ENCODE measurements at regions of chr13 and their contacts with region 1.

Region 1: GRCh38 chr13:32164622-32165268 is 133.2 kb downstream of the FRY start:
- DNase-seq: peak; percentile 81
- H3K4me3 Mint-ChIP-seq: no peak overlapping the region
- H3K27ac Mint-ChIP-seq: peak overlapping the region; percentile 61
- H3K4me1 Mint-ChIP-seq: peaks cover 12% of the 10 kb centered on the region
- H3K27me3 Mint-ChIP-seq: no peaks in the 10 kb centered on the region
- CTCF ChIP-seq: peak; percentile 38

Region 2: GRCh38 chr13:32125221-32125631 is 39.5 kb before region 1 on chr13:
- CTCF ChIA-PET with region 1: interaction called, 4 read pairs
- POLR2A ChIA-PET with region 1: interaction called, 19 read pairs
- intact Hi-C with region 1: no loop called
- DNase-seq: peak; percentile 95
- H3K4me3 Mint-ChIP-seq: peak overlapping the region; percentile 16
- H3K27ac Mint-ChIP-seq: peak overlapping the region; percentile 64
- H3K4me1 Mint-ChIP-seq: peaks cover 5% of the 10 kb centered on the region
- H3K27me3 Mint-ChIP-seq: no peaks in the 10 kb centered on the region
- CTCF ChIP-seq: no peak

Region 3: DNA sequence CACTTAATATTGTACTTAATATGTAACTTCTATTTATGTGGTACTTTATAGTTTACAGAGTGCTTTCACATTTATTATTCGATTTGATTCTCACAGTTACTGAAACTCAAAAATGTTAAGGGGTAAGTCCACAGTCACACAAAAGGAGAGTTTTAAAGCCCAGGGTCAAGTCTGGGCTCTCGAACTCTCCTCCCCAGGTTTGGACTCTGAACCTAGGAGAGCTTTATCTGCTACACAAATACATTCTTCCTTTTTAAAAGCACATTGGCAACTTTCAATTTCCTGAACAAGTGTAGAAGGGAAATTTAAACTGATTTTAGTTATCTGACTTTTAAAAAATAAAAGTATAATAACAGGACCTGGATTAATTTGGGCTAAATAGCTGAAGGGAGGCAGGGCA is 11.2 kb after region 1 on chr13:
- CTCF ChIA-PET with region 1: interaction called, 13 read pairs
- POLR2A ChIA-PET with region 1: interaction called, 6 read pairs
- intact Hi-C with region 1: no loop called
- DNase-seq: no peak
- H3K4me3 Mint-ChIP-seq: no peak overlapping the region
- H3K27ac Mint-ChIP-seq: no peak overlapping the region
- H3K4me1 Mint-ChIP-seq: no peaks in the 10 kb centered on the region
- H3K27me3 Mint-ChIP-seq: no peaks in the 10 kb centered on the region
- CTCF ChIP-seq: no peak

Region 4: DNA sequence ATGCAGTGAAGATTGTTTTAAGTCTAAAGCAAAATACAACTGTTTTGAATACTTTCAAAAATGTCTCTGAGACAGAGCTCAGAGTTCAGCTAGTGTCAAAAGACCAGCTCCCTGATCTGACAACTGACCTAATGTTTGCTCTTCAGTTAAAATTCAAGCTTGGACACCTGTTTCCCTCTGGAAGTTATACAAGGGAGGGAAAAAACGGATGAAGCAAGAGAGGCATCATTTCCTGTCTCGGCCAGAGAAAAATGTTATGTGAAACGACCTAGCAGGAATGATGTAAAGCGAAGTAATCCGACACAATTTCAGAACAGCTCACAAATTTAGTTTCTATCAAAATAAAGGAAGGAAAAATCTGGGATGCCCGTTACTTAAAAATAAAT is 91.0 kb after region 1 on chr13:
- CTCF ChIA-PET with region 1: interaction called, 10 read pairs
- POLR2A ChIA-PET with region 1: interaction called, 8 read pairs
- intact Hi-C with region 1: no loop called
- DNase-seq: peak; percentile 76
- H3K4me3 Mint-ChIP-seq: no peak overlapping the region
- H3K27ac Mint-ChIP-seq: no peak overlapping the region
- H3K4me1 Mint-ChIP-seq: peaks cover 19% of the 10 kb centered on the region
- H3K27me3 Mint-ChIP-seq: no peaks in the 10 kb centered on the region
- CTCF ChIP-seq: no peak

Region 5: DNA sequence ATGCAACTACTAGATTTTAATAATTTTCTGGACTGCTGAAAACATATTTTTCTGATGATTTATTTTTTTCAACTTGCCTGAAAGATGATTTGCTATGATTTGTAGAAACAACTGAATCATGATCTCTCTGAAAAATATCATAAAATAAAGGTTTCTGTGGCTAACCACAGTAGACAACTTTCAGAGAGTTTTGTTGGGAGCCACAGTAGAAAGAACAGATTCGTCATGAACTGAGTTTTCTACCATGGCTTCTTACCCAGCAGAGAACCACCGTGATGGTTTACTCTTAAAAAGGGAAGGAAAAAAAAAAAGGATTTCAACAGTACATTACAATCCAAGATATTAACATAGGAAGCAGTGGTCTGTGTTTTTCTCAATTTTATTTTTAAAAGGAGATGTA is 132.5 kb after region 1 on chr13:
- CTCF ChIA-PET with region 1: no interaction called
- POLR2A ChIA-PET with region 1: no interaction called
- intact Hi-C with region 1: no loop called
- DNase-seq: no peak
- H3K4me3 Mint-ChIP-seq: no peak overlapping the region
- H3K27ac Mint-ChIP-seq: no peak overlapping the region
- H3K4me1 Mint-ChIP-seq: no peaks in the 10 kb centered on the region
- H3K27me3 Mint-ChIP-seq: no peaks in the 10 kb centered on the region
- CTCF ChIP-seq: no peak

Region 6: DNA sequence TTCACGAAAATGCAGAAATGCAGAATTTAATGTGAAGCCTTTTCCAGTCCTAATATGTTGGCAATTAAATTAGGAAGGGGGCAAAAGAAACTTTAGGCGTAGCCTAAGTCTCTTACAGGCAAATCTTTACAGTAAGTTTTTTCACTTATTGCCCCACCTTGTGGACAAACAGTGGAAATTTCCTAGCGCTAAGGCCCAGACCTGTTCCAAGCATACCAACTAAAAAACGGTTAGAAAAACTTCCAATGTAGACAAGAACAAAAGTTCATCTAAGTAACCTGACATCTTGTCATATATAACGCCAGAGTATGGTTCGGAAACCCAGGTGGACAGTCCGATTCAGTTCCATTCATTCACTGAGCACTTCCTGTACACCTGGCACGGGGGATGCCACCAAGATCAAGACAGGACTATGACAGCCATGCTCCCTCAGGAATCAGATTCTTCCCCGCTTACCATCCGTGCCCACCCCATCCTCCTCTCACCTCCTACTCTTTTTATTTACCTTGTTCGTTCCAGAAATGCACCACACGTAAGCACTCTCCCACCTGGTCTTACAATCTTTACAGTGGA is 145.5 kb after region 1 on chr13:
- CTCF ChIA-PET with region 1: interaction called, 9 read pairs
- POLR2A ChIA-PET with region 1: interaction called, 4 read pairs
- intact Hi-C with region 1: loop called (anchors 1 kb)
- DNase-seq: peak; percentile 72
- H3K4me3 Mint-ChIP-seq: no peak overlapping the region
- H3K27ac Mint-ChIP-seq: no peak overlapping the region
- H3K4me1 Mint-ChIP-seq: no peaks in the 10 kb centered on the region
- H3K27me3 Mint-ChIP-seq: no peaks in the 10 kb centered on the region
- CTCF ChIP-seq: peak; percentile 54

Measured in MCF 10A (cell line).